Activated CD8-positive, alpha-beta T cell treated with anti-CD3 and anti-CD28 coated beads for 36 hours (primary cell): ENCODE measurements at regions of chr19 and their contacts with region 1.

Region 1: DNA sequence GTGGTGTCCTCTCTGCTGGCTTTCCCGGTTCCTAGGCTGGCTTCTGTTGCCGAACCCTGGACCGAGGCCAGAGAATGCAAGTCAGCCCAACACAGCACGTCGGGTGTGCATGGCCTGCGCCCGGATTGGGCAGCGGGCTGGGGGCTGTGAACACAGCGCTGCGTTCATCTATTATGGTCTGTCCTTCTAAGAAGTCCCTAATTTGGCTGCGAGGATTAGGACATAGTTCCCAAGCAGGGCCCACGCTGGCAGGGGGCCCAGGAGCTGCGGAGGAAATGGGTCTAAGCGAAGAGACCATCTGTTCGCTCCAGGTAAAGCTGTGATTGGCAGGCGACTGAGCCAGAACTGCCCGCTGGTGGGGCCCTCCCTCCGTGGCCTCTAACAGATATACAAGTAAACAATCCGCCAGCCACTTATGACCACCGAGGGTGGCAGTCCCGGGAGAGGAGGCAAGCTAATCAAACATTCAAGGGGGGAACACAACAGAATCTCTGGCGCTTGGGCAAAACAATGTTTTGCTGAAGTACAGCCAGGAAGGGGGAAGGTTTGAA is 6.0 kb downstream of the SYCE2 start:
- DNase-seq: no peak
- ATAC-seq: no peak
- H3K4me3 Mint-ChIP-seq: no peak overlapping the region
- H3K27ac Mint-ChIP-seq: peak overlapping the region; percentile 40
- H3K4me1 Mint-ChIP-seq: peaks cover 19% of the 10 kb centered on the region
- H3K27me3 Mint-ChIP-seq: no peaks in the 10 kb centered on the region
- CTCF ChIP-seq: no peak

Region 2: DNA sequence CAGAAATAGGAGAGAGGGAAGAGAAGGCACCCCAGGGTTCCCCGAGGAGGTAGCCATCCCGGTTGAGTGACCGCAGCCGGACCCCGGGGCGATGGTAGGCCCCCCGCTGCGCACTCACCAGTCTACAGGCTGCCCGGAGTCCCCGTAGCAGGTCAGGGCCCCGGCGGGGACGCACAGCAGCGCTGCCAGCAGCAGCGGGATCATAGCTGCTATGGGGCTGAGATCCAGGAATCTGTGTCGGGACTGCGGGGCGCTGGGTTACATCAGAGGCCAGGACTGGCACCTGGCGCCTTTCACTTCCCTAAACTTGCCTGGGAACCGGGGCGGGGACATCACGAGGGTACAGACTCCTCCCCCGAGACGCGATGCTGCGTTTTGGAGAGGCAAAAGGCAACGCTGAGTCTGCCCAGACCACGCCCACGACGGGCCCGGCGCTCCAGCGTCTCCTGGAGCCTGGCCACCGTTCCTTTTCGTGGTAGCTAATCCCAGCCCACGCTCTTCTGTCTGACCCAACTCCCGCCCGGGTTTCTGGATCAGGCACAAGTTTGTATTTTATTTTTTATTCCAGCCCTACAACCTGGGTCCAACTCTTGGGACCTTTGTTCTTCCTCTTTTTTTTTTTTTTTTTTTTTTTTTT is 31.8 kb before region 1 on chr19 and contains the start of gene DNASE2:
- CTCF ChIA-PET with region 1: interaction called, 16 read pairs
- POLR2A ChIA-PET with region 1: interaction called, 4 read pairs
- intact Hi-C with region 1: no loop called
- DNase-seq: peak; percentile 96
- ATAC-seq: peak; percentile 73
- H3K4me3 Mint-ChIP-seq: peak within 1 kb of the TSS; percentile 90
- H3K27ac Mint-ChIP-seq: peak within 1 kb of the TSS; percentile 88
- H3K4me1 Mint-ChIP-seq: peaks cover 16% of the 10 kb centered on the region
- H3K27me3 Mint-ChIP-seq: no peaks in the 10 kb centered on the region
- CTCF ChIP-seq: no peak
- total RNA-seq, gene DNASE2: 22.3 to 26.1 TPM

Region 3: GRCh38 chr19:12994701-12995595 is 81.9 kb after region 1 on chr19 and contains the start of gene NFIX:
- CTCF ChIA-PET with region 1: no interaction called
- POLR2A ChIA-PET with region 1: no interaction called
- intact Hi-C with region 1: no loop called
- DNase-seq: peak; percentile 60
- ATAC-seq: peak; percentile 72
- H3K4me3 Mint-ChIP-seq: peak within 1 kb of the TSS; percentile 82
- H3K27ac Mint-ChIP-seq: peak within 1 kb of the TSS; percentile 60
- H3K4me1 Mint-ChIP-seq: peaks cover 8% of the 10 kb centered on the region
- H3K27me3 Mint-ChIP-seq: peaks cover 8% of the 10 kb centered on the region
- CTCF ChIP-seq: no peak
- total RNA-seq, gene NFIX: 4.7 to 5.0 TPM

Region 4: DNA sequence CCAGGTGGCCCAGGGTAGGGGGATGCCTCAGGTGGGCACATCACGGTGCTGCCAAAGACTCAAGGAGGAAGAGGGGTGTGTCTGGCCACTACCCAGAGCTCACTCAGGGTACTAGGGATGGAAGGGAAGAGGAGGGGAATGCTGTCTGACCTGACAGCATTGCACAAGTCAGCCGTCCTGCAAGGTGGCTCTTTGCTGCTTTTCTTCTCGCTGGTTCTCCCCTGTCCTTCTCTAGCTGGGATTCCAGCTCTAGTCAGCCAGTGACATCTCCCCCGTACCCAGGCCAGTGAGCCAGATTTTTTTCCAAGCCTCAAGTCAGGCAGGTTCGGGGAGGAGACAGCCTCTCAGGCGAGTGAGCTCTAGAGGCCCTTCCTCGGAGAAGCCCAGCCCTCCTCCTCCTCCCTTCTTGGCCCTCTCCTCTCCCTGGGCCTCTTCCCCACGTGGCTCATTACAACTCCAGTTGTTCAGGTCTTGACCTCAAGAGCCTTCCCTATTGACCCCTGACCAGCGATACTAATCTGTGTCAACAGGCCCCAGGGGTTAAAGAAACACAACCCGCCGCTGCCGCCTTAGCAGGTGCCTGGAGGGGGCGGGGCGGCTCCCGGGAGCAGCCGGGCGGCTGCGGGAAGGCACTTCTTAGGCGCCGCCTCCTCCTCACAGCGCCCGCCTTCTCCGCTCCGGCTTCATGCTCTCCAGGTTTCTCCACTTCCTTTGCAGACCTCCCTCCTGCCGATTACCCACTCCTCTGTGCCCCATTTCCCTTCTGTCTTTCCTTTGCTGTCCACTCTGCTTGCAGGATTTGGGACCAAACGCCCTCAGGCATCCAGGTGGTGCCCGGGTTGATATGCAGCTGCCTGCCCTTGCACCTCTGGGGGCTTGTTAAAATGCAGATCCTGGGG is 138.4 kb after region 1 on chr19:
- CTCF ChIA-PET with region 1: no interaction called
- POLR2A ChIA-PET with region 1: no interaction called
- intact Hi-C with region 1: no loop called
- DNase-seq: peak; percentile 27
- ATAC-seq: peak; percentile 60
- H3K4me3 Mint-ChIP-seq: no peak overlapping the region
- H3K27ac Mint-ChIP-seq: no peak overlapping the region
- H3K4me1 Mint-ChIP-seq: peaks cover 11% of the 10 kb centered on the region
- H3K27me3 Mint-ChIP-seq: peaks cover 4% of the 10 kb centered on the region
- CTCF ChIP-seq: no peak